Upper lobe of right lung (tissue), 1 donor: ENCODE measurements at regions of chr10 and their contacts with region 1.

Region 1: GRCh38 chr10:117496616-117497028 is 45.9 kb upstream of the EMX2 start:
- DNase-seq: peak; percentile 85
- ATAC-seq: peak; percentile 97
- H3K4me3 ChIP-seq: no peak overlapping the region
- H3K27ac ChIP-seq: no peak overlapping the region
- H3K4me1 ChIP-seq: no peaks in the 10 kb centered on the region
- H3K27me3 ChIP-seq: no peaks in the 10 kb centered on the region
- CTCF ChIP-seq: peak; percentile 96

Region 2: DNA sequence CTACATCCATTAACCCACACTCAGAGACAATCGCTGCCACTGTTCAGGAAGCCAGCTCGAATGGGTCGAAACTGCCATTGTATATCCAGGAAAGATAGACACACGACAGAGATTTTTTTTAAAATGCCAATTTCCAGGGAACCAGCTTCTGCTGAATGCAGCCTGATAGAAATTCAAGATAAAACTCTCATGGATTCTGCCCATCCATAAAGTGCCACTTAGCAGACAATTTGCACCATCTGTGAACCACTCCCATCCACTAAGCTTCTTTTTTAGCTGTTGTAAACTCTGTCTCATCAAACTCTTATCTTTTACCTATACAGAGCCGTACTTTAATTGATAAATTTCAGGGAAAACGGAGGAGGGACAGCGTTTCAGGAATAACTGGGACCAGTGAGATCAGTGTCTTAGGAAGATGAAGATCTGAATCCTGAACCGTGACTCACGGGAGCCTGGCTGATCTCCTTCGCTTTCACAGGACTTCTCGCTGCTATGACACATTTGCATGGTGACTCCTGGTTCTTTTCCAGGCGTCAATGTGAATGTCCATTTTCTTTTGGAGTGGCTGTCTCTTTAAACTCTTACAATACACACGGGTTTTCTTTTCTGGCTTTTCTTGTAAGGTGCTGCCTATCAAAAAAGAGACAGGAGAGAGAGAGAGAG is 742.1 kb after region 1 on chr10:
- intact Hi-C with region 1: loop called (anchors 5 kb)
- DNase-seq: no peak
- ATAC-seq: no peak
- H3K4me3 ChIP-seq: no peak overlapping the region
- H3K27ac ChIP-seq: no peak overlapping the region
- H3K4me1 ChIP-seq: no peaks in the 10 kb centered on the region
- H3K27me3 ChIP-seq: peaks cover 52% of the 10 kb centered on the region
- CTCF ChIP-seq: no peak